CD8-positive, alpha-beta T cell (primary cell): ENCODE measurements at regions of chr6 and their contacts with region 1.

Region 1: GRCh38 chr6:35259194-35259947 is at the start of gene ZNF76:
- DNase-seq: peak; percentile 86 to 97 (median 93)
- ATAC-seq: peak; percentile 73
- H3K4me3 ChIP-seq: peak within 1 kb of the TSS; percentile 75 to 95
- H3K4me3 Mint-ChIP-seq: peak within 1 kb of the TSS; percentile 97
- H3K27ac ChIP-seq: peak within 1 kb of the TSS; percentile 88 to 96
- H3K27ac Mint-ChIP-seq: peak within 1 kb of the TSS; percentile 99
- H3K4me1 ChIP-seq: peaks cover 42% of the 10 kb centered on the region
- H3K4me1 Mint-ChIP-seq: peaks cover 55% of the 10 kb centered on the region
- H3K27me3 ChIP-seq: no peaks in the 10 kb centered on the region
- H3K27me3 Mint-ChIP-seq: no peaks in the 10 kb centered on the region
- CTCF ChIP-seq: no peak
- total RNA-seq, gene ZNF76: 54.6 to 57.8 TPM

Region 2: DNA sequence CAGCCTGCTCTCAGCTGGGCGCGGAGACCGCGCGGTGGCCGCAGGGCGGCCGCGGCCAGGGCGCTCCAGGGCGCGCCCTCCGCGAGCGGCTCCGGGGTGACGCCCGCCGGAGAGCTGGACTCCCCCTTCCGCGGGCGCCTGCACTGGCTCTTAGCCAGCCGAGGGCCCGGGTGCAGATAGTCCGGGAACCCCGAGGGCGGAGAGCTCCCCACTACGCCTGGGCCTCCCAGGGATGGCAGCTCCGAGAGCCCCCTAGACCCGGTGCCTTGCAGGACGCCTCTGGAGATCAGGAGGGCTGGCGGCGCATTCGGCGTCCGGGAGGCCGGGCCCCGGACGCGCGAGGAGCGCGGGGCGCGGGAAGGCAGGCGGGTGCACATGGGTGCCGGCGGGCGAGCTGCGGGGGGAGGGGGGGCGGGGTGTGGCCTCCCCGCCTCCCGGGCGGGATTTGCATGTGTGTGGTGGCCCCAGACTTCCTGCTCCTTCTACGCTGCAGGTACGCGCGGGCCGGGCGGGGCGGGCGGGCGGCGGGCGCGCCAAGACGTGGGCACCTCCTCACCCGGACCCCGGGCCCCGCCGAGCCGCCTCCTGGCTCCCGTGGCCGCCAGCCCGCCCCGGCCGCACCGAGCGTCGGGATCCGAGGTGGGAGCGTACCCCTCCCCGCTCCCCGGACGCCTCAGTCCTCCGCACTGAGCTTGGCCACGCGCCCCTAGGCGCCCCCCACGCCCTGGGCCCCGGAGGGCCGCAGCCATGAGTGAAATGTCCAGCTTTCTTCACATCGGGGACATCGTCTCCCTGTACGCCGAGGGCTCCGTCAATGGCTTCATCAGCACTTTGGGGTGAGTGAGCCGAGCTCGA is 1638.3 kb before region 1 on chr6 and contains the start of gene ITPR3:
- CTCF ChIA-PET with region 1: no interaction called
- POLR2A ChIA-PET with region 1: no interaction called
- intact Hi-C with region 1: loop called in 1 of 2 experiments (anchors 5 kb)
- DNase-seq: peak; percentile 55 to 92 (median 72)
- ATAC-seq: peak; percentile 84
- H3K4me3 ChIP-seq: peak within 1 kb of the TSS; percentile 79 to 95
- H3K4me3 Mint-ChIP-seq: peak within 1 kb of the TSS; percentile 90
- H3K27ac ChIP-seq: peak within 1 kb of the TSS; percentile 78 to 86
- H3K27ac Mint-ChIP-seq: peak within 1 kb of the TSS; percentile 91
- H3K4me1 ChIP-seq: peaks cover 38% of the 10 kb centered on the region
- H3K4me1 Mint-ChIP-seq: peaks cover 66% of the 10 kb centered on the region
- H3K27me3 ChIP-seq: no peaks in the 10 kb centered on the region
- H3K27me3 Mint-ChIP-seq: no peaks in the 10 kb centered on the region
- CTCF ChIP-seq: no peak
- total RNA-seq, gene ITPR3: 39.5 to 40.1 TPM

Region 3: GRCh38 chr6:34757687-34758274 is 501.6 kb before region 1 on chr6:
- CTCF ChIA-PET with region 1: no interaction called
- POLR2A ChIA-PET with region 1: no interaction called
- intact Hi-C with region 1: loop called in 1 of 2 experiments (anchors 1 kb)
- DNase-seq: no peak
- ATAC-seq: no peak
- H3K4me3 ChIP-seq: peak overlapping the region; percentile 71 to 79
- H3K4me3 Mint-ChIP-seq: no peak overlapping the region
- H3K27ac ChIP-seq: peak overlapping the region; percentile 86 to 92
- H3K27ac Mint-ChIP-seq: no peak overlapping the region
- H3K4me1 ChIP-seq: peaks cover 18% of the 10 kb centered on the region
- H3K4me1 Mint-ChIP-seq: peaks cover 20% of the 10 kb centered on the region
- H3K27me3 ChIP-seq: no peaks in the 10 kb centered on the region
- H3K27me3 Mint-ChIP-seq: no peaks in the 10 kb centered on the region
- CTCF ChIP-seq: no peak

Region 4: GRCh38 chr6:35327349-35328027 is 68.1 kb after region 1 on chr6:
- CTCF ChIA-PET with region 1: no interaction called
- POLR2A ChIA-PET with region 1: interaction called, 3 read pairs
- intact Hi-C with region 1: loop called in 1 of 2 experiments (anchors 2 kb)
- DNase-seq: peak; percentile 61 to 86 (median 82)
- ATAC-seq: peak; percentile 81
- H3K4me3 ChIP-seq: no peak overlapping the region
- H3K4me3 Mint-ChIP-seq: peak overlapping the region; percentile 42
- H3K27ac ChIP-seq: peak overlapping the region in 1 of 2 experiments; percentile 62
- H3K27ac Mint-ChIP-seq: peak overlapping the region; percentile 88
- H3K4me1 ChIP-seq: peaks cover 19% of the 10 kb centered on the region
- H3K4me1 Mint-ChIP-seq: peaks cover 21% of the 10 kb centered on the region
- H3K27me3 ChIP-seq: no peaks in the 10 kb centered on the region
- H3K27me3 Mint-ChIP-seq: no peaks in the 10 kb centered on the region
- CTCF ChIP-seq: peak; percentile 68

Region 5: DNA sequence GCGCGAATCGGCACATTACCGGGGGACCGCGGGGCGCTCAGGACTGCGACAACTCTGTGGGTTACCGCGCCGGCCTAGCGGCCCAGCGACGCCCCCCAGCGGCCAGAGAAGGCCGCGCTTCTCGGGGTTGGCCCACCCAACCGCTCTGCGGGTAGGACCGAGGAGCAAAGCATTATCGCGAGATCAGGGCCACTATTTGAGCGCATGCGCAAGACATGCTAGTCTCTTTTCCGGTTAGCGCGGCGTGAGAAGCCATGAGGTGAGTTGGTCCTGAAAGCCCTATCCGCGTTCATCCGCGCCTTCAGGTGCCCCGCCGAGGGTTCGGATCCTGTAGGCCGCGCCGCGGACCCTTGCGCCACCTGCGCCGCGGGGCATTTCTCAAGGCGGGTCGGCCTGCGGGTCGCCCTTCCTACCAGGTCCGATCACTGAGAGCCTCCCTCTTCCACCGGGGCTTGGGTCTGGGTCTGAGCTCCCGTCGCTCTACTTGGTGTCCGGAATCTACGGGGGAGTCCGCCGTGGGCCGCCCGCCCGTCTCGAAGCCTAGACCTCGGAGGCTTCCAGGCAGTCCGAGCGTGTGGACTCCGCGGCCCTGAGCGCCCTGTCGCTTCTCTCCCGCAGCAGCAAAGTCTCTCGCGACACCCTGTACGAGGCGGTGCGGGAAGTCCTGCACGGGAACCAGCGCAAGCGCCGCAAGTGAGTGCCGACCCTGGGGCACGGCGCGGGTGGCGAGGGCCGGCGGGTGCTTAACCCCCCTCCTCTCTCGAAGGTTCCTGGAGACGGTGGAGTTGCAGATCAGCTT is 209.0 kb after region 1 on chr6 and contains the start of gene RPL10A:
- CTCF ChIA-PET with region 1: no interaction called
- POLR2A ChIA-PET with region 1: no interaction called
- intact Hi-C with region 1: loop called in 1 of 2 experiments (anchors 1 kb)
- DNase-seq: peak; percentile 90 to 99 (median 96)
- ATAC-seq: peak; percentile 88
- H3K4me3 ChIP-seq: peak within 1 kb of the TSS; percentile 74 to 100
- H3K4me3 Mint-ChIP-seq: peak within 1 kb of the TSS; percentile 96
- H3K27ac ChIP-seq: peak within 1 kb of the TSS; percentile 76 to 90
- H3K27ac Mint-ChIP-seq: peak within 1 kb of the TSS; percentile 99
- H3K4me1 ChIP-seq: peaks cover 26% of the 10 kb centered on the region
- H3K4me1 Mint-ChIP-seq: peaks cover 39% of the 10 kb centered on the region
- H3K27me3 ChIP-seq: no peaks in the 10 kb centered on the region
- H3K27me3 Mint-ChIP-seq: no peaks in the 10 kb centered on the region
- CTCF ChIP-seq: peak; percentile 90
- total RNA-seq, gene RPL10A: 2,275 to 2,367 TPM

Region 6: GRCh38 chr6:36131511-36132245 is 872.3 kb after region 1 on chr6:
- CTCF ChIA-PET with region 1: no interaction called
- POLR2A ChIA-PET with region 1: no interaction called
- intact Hi-C with region 1: loop called in 1 of 2 experiments (anchors 5 kb)
- DNase-seq: peak in 8 of 9 experiments; percentile 22 to 78 (median 48)
- ATAC-seq: peak; percentile 71
- H3K4me3 ChIP-seq: peak overlapping the region; percentile 79 to 89
- H3K4me3 Mint-ChIP-seq: peak overlapping the region; percentile 88
- H3K27ac ChIP-seq: peak overlapping the region; percentile 81 to 92
- H3K27ac Mint-ChIP-seq: peak overlapping the region; percentile 95
- H3K4me1 ChIP-seq: peaks cover 48% of the 10 kb centered on the region
- H3K4me1 Mint-ChIP-seq: peaks cover 54% of the 10 kb centered on the region
- H3K27me3 ChIP-seq: no peaks in the 10 kb centered on the region
- H3K27me3 Mint-ChIP-seq: no peaks in the 10 kb centered on the region
- CTCF ChIP-seq: no peak

Region 7: GRCh38 chr6:37257634-37258404 is 1998.4 kb after region 1 on chr6 and contains the starts of genes TBC1D22B and TMEM217:
- CTCF ChIA-PET with region 1: no interaction called
- POLR2A ChIA-PET with region 1: no interaction called
- intact Hi-C with region 1: loop called in 1 of 2 experiments (anchors 10 kb)
- DNase-seq: peak; percentile 89 to 97 (median 95)
- ATAC-seq: peak; percentile 99
- H3K4me3 ChIP-seq: peak within 1 kb of the TSS; percentile 93 to 100
- H3K4me3 Mint-ChIP-seq: peak within 1 kb of the TSS; percentile 92
- H3K27ac ChIP-seq: peak within 1 kb of the TSS; percentile 74 to 94
- H3K27ac Mint-ChIP-seq: peak within 1 kb of the TSS; percentile 85
- H3K4me1 ChIP-seq: peaks cover 24% of the 10 kb centered on the region
- H3K4me1 Mint-ChIP-seq: peaks cover 40% of the 10 kb centered on the region
- H3K27me3 ChIP-seq: no peaks in the 10 kb centered on the region
- H3K27me3 Mint-ChIP-seq: no peaks in the 10 kb centered on the region
- CTCF ChIP-seq: no peak
- total RNA-seq, gene TBC1D22B: 6.7 to 6.8 TPM
- total RNA-seq, gene TMEM217: 0.27 to 1.2 TPM